ENCODE measurements at regions of chr2 and their contacts with region 1.

Region 1: DNA sequence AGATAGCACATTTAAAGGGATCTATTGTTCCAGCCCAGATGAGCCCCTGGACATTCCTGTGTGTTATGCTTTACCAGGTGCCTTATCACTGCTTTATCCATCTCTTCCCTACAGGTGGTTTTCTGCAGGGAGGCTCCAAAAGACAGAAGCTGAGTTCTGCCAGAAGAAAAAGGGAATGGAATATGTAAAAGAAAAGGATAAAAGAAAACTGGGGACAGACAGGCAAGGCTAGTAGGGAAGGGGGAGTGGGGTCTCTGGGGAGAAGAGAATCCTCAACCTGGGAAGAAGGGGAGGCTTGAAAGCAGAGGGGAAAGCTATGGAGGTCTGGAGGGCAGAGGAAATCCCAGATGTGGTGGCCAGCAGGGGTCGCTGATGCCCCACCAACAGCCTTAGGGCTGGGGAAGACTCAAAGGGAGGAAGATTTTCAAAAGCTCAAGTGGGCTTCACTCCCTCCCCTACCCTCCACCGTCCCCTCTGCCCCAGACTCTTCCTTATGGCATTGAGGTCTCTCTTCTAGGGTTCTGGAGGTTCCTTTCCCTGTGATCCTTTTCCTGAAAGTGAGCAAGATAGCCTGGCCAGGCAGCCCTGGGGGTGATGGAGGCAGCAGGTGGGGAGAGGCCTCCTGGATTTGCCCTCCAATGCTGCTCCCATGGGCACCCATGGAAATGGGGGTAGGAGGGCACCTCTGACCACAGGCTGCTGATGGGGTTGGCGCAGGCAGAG is 178.1 kb upstream of the PKDCC start:
- DNase-seq: peak; percentile 42 to 74
- ATAC-seq: peak; percentile 81 to 90
- H3K4me3 ChIP-seq: no peak overlapping the region
- H3K27ac ChIP-seq: peak overlapping the region; percentile 69 to 76 (median 74)
- H3K4me1 ChIP-seq: peaks cover 11 to 16% of the 10 kb centered on the region in 2 donors
- H3K27me3 ChIP-seq: no peaks in the 10 kb centered on the region
- CTCF ChIP-seq: peak; percentile 81 to 95 (median 91)
- POLR2A ChIP-seq: no peak

Region 2: GRCh38 chr2:41840702-41841551 is 28.8 kb before region 1 on chr2:
- in situ Hi-C with region 1: no loop called
- intact Hi-C with region 1: loop called (anchors 2 kb)
- DNase-seq: peak; percentile 94 to 97
- ATAC-seq: peak; percentile 99 to 100
- H3K4me3 ChIP-seq: peak overlapping the region; percentile 63 to 87 (median 79)
- H3K27ac ChIP-seq: peak overlapping the region; percentile 84 to 93 (median 92)
- H3K4me1 ChIP-seq: peaks cover 9 to 16% of the 10 kb centered on the region in 2 donors
- H3K27me3 ChIP-seq: no peaks in the 10 kb centered on the region
- CTCF ChIP-seq: peak; percentile 98 to 99 (median 98)
- POLR2A ChIP-seq: peak; percentile 40 to 91

Region 3: GRCh38 chr2:41966431-41966893 is 96.8 kb after region 1 on chr2:
- in situ Hi-C with region 1: no loop called
- intact Hi-C with region 1: loop called (anchors 2 kb)
- DNase-seq: peak; percentile 72 to 83
- ATAC-seq: peak; percentile 86 to 87
- H3K4me3 ChIP-seq: no peak overlapping the region
- H3K27ac ChIP-seq: peak overlapping the region; percentile 70 to 80 (median 73)
- H3K4me1 ChIP-seq: peaks cover 32 to 34% of the 10 kb centered on the region in 2 donors
- H3K27me3 ChIP-seq: no peaks in the 10 kb centered on the region
- CTCF ChIP-seq: no peak
- POLR2A ChIP-seq: no peak

Region 4: GRCh38 chr2:42086500-42086953 is 216.8 kb after region 1 on chr2:
- in situ Hi-C with region 1: loop called (anchors 5 kb)
- intact Hi-C with region 1: loop called (anchors 1 kb)
- DNase-seq: peak in 1 of 2 donors; percentile 47
- ATAC-seq: peak; percentile 66
- H3K4me3 ChIP-seq: no peak overlapping the region
- H3K27ac ChIP-seq: no peak overlapping the region
- H3K4me1 ChIP-seq: peaks cover 5 to 8% of the 10 kb centered on the region in 2 donors
- H3K27me3 ChIP-seq: no peaks in the 10 kb centered on the region
- CTCF ChIP-seq: peak; percentile 72 to 89 (median 82)
- POLR2A ChIP-seq: no peak